ENCODE measurements at regions of chr16 and their contacts with region 1.

Region 1: GRCh38 chr16:29862884-29863668 is at the start of gene CDIPT:
- DNase-seq: peak; percentile 85 to 98 (median 90)
- ATAC-seq: peak; percentile 96
- H3K4me3 ChIP-seq: peak within 1 kb of the TSS; percentile 76
- H3K4me3 Mint-ChIP-seq: peak within 1 kb of the TSS; percentile 95
- H3K27ac ChIP-seq: peak within 1 kb of the TSS; percentile 87 to 97
- H3K27ac Mint-ChIP-seq: peak within 1 kb of the TSS; percentile 95
- H3K4me1 ChIP-seq: peaks cover 30% of the 10 kb centered on the region
- H3K4me1 Mint-ChIP-seq: peaks cover 22% of the 10 kb centered on the region
- H3K27me3 ChIP-seq: no peaks in the 10 kb centered on the region
- H3K27me3 Mint-ChIP-seq: no peaks in the 10 kb centered on the region
- CTCF ChIP-seq: peak; percentile 70
- total RNA-seq, gene CDIPT: 25.7 to 27.0 TPM

Region 2: DNA sequence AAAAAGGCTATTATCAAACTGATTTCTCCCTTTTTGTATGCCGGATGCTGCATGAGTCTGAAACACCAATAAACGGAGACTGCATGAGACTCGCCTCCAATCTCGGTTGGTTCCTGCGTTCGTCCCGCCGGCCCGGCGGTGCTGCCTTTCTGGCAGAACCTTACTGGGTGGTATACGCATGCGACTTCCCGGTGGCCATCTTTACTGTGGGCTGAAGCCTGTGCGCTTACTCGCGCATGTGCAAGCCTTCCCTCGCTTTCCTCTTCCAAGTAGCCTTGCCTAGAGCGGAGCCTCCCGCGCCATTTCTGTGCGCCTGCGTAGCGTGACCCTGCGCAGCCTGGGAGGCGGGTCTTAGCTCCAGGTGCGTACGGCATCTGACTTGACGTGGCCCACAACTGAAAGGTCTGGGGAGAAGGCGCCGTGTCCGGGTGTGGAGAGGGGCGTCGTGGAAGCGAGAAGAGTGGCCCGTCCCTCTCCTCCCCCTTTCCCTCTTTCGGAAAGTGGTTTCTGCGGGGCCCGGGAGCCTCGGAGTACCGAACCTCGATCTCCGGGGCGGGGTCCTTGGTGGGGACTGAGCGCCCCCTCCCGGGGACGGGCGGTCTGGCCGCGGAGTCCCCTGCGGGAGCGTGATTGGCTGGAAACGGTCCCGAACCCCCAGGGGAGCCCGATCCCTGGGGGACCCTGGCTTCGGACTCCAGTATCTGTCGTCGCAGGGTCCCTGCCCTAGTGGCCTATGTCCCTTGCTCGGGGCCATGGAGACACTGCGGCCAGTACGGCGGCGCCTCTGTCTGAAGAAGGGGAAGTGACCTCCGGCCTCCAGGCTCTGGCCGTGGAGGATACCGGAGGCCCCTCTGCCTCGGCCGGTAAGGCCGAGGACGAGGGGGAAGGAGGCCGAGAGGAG is 47.0 kb before region 1 on chr16 and contains the start of gene PAGR1:
- CTCF ChIA-PET with region 1: interaction called, 4 read pairs
- POLR2A ChIA-PET with region 1: interaction called, 6 read pairs
- intact Hi-C with region 1: loop called in 1 of 2 experiments (anchors 1 kb)
- DNase-seq: peak; percentile 97 to 100 (median 98)
- ATAC-seq: peak; percentile 73
- H3K4me3 ChIP-seq: peak within 1 kb of the TSS; percentile 95
- H3K4me3 Mint-ChIP-seq: peak within 1 kb of the TSS; percentile 97
- H3K27ac ChIP-seq: peak within 1 kb of the TSS; percentile 84 to 94
- H3K27ac Mint-ChIP-seq: peak within 1 kb of the TSS; percentile 90
- H3K4me1 ChIP-seq: peaks cover 92% of the 10 kb centered on the region
- H3K4me1 Mint-ChIP-seq: peaks cover 83% of the 10 kb centered on the region
- H3K27me3 ChIP-seq: no peaks in the 10 kb centered on the region
- H3K27me3 Mint-ChIP-seq: no peaks in the 10 kb centered on the region
- CTCF ChIP-seq: peak; percentile 97
- total RNA-seq, gene PAGR1: 20.3 TPM

Region 3: DNA sequence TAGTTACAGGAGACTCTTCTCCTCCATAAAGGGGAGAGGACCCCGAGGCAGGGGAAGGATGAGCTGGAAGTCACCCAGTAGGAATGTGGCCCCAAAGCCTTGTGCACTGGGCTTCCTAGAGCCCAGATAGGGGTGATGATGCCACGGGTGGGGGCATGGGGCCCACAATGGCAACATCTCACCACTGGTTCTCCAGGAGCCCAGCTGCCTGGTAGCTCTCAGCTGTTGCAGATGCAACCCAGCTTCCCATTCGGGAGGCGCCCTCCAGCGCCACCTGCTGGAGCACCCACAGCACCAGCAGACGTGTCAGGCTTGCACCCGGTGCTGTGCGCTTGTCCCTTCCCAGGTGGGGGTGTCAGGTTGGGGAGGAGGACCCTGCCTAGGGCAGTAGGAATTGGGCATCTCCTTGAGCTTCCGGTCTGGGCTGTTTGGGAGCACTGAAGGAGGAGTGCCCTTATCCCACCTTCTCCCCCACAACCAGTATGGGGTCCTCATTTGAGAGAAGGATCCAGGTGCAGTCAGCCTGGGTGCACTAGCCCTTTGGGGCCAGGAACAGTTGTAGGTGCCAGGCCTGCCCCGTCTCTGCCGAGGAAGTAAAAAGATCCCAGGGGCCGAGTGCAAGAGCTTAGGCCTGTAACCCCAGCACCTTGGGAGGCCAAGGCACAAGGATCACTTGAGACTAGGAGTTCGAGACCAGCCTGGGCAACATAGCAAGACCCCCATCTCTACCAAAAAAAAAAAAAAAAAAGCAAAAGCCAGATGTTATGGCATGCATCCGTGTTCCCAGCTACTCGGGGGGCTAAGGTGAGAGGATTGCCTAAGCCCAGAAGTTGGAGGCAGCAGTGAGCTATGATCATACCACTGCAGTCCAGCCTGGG is 14.4 kb before region 1 on chr16:
- CTCF ChIA-PET with region 1: interaction called, 11 read pairs
- POLR2A ChIA-PET with region 1: interaction called, 9 read pairs
- intact Hi-C with region 1: no loop called
- DNase-seq: peak; percentile 74 to 93 (median 82)
- ATAC-seq: peak; percentile 97
- H3K4me3 ChIP-seq: no peak overlapping the region
- H3K4me3 Mint-ChIP-seq: no peak overlapping the region
- H3K27ac ChIP-seq: no peak overlapping the region
- H3K27ac Mint-ChIP-seq: no peak overlapping the region
- H3K4me1 ChIP-seq: peaks cover 7% of the 10 kb centered on the region
- H3K4me1 Mint-ChIP-seq: peaks cover 7% of the 10 kb centered on the region
- H3K27me3 ChIP-seq: no peaks in the 10 kb centered on the region
- H3K27me3 Mint-ChIP-seq: no peaks in the 10 kb centered on the region
- CTCF ChIP-seq: peak; percentile 92

Region 4: GRCh38 chr16:29900102-29900887 is 37.2 kb after region 1 on chr16 and contains the start of gene ASPHD1:
- CTCF ChIA-PET with region 1: interaction called, 3 read pairs
- POLR2A ChIA-PET with region 1: interaction called, 4 read pairs
- intact Hi-C with region 1: loop called in 1 of 2 experiments (anchors 2 kb)
- DNase-seq: peak in 11 of 14 experiments; percentile 47 to 88 (median 70)
- ATAC-seq: peak; percentile 89
- H3K4me3 ChIP-seq: peak within 1 kb of the TSS; percentile 55
- H3K4me3 Mint-ChIP-seq: peak within 1 kb of the TSS; percentile 74
- H3K27ac ChIP-seq: no peak within 1 kb of the TSS
- H3K27ac Mint-ChIP-seq: no peak within 1 kb of the TSS
- H3K4me1 ChIP-seq: peaks cover 22% of the 10 kb centered on the region
- H3K4me1 Mint-ChIP-seq: peaks cover 4% of the 10 kb centered on the region
- H3K27me3 ChIP-seq: peaks cover 28 to 29% of the 10 kb centered on the region in 2 experiments
- H3K27me3 Mint-ChIP-seq: peaks cover 31% of the 10 kb centered on the region
- CTCF ChIP-seq: no peak
- total RNA-seq, gene ASPHD1: not detected

Region 5: DNA sequence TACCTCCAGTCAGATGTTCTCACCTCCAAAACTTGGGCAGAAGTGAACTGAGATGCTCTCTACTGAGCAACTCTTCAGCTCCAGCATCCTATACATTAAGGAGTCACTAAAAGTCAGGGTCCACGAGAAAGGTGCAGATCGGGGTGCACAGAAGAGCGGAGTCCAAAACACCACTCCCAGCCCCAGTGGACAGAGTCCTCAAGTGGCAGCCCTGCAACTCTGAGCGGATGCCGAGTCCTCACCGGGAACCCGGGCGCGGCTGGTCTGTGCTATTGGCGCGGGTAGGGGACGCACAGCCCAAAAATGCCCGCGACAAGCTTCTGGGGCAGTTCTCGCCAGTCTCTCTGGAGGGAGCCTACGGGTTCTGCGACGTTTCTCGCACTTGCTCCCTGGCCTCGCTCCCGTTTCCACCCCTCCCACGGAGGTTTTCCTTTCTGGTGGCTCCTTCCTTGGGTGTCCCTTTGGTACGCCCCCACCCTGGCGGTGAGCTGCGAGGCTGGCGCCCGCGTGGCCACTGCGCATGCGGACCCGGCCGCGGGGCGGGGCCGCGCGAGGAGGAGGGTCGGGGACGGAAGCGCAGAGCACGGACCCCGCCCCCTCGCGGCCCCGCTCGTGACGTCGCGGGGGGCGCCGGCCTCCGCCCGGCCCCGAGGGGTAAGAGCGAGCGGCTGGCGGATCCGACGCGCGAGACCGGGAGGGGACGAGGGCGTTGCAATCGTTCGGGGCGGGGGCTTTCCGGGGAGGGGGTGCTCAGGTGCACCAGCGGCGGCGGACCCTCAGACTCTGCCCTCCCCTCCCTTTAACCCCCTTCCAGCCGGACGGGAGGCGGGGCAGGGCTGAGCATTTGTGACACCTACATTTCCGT is 98.6 kb after region 1 on chr16 and contains the start of gene TMEM219:
- CTCF ChIA-PET with region 1: no interaction called
- POLR2A ChIA-PET with region 1: interaction called, 15 read pairs
- intact Hi-C with region 1: loop called in 1 of 2 experiments (anchors 1 kb)
- DNase-seq: peak; percentile 87 to 97 (median 94)
- ATAC-seq: peak; percentile 83
- H3K4me3 ChIP-seq: peak within 1 kb of the TSS; percentile 88
- H3K4me3 Mint-ChIP-seq: peak within 1 kb of the TSS; percentile 93
- H3K27ac ChIP-seq: peak within 1 kb of the TSS; percentile 77 to 92
- H3K27ac Mint-ChIP-seq: peak within 1 kb of the TSS; percentile 91
- H3K4me1 ChIP-seq: peaks cover 23% of the 10 kb centered on the region
- H3K4me1 Mint-ChIP-seq: peaks cover 31% of the 10 kb centered on the region
- H3K27me3 ChIP-seq: no peaks in the 10 kb centered on the region
- H3K27me3 Mint-ChIP-seq: no peaks in the 10 kb centered on the region
- CTCF ChIP-seq: peak; percentile 32
- total RNA-seq, gene TMEM219: 56.9 to 63.3 TPM

Region 6: DNA sequence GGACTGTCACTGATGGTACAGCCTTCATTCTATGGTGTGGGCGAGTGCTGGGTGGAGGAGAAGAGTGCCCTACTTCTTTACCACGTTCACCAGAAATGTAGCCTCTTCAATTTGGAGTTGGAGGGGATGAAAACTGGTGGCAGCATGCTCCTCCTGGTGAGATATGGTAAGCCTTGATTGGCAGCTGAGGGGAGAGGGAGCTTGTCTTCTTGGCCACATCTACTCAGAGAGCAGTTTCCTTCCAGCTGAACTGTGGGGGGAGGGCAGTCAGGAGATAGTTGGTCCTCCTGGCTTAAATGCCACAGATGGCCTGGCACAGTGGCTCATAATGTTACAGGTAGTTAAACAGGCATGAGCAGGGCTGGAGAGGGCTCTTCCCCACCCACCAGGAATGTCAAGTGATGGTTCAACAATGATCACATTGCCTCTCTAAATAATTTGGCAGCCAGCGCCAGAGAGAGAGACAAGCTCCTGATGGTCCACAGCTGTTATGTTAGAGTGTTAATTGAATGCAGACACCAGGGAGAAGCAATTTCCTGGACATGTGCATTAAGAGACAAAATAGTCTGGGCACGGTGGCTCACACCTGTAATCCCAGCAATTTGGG is 268.9 kb after region 1 on chr16:
- CTCF ChIA-PET with region 1: no interaction called
- POLR2A ChIA-PET with region 1: no interaction called
- intact Hi-C with region 1: no loop called
- DNase-seq: no peak
- ATAC-seq: no peak
- H3K4me3 ChIP-seq: no peak overlapping the region
- H3K4me3 Mint-ChIP-seq: no peak overlapping the region
- H3K27ac ChIP-seq: no peak overlapping the region
- H3K27ac Mint-ChIP-seq: no peak overlapping the region
- H3K4me1 ChIP-seq: peaks cover 11% of the 10 kb centered on the region
- H3K4me1 Mint-ChIP-seq: no peaks in the 10 kb centered on the region
- H3K27me3 ChIP-seq: no peaks in the 10 kb centered on the region
- H3K27me3 Mint-ChIP-seq: no peaks in the 10 kb centered on the region
- CTCF ChIP-seq: no peak